ENCODE measurements at regions of chr10 and their contacts with region 1.

Region 1: GRCh38 chr10:16449454-16449853 is 12.6 kb downstream of the PTER start:
- DNase-seq: no peak
- ATAC-seq: no peak
- H3K4me3 ChIP-seq: no peak overlapping the region
- H3K27ac ChIP-seq: no peak overlapping the region
- H3K4me1 ChIP-seq: no peaks in the 10 kb centered on the region
- H3K27me3 ChIP-seq: no peaks in the 10 kb centered on the region
- CTCF ChIP-seq: no peak
- POLR2A ChIP-seq: no peak
- RAD21 ChIP-seq: no peak

Region 2: DNA sequence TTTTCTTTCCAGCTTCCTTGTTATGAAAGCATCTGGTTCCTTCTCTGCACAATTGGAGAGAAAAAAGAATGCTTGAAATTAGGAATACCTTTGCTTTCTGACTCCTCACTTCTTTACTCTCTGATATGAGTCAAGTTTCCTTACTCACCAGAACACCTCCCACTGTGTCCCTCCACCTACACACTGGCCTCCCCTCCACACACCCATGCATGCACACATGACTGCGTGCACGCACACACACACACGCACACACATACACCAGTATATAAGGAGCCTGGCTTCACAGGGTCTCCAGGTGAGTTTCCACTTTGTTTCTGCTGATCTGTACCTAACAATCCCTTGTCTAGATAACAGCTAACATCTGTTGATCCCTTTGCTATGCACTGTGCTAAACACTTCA is 24.0 kb before region 1 on chr10:
- CTCF ChIA-PET with region 1: no interaction called
- POLR2A ChIA-PET with region 1: no interaction called
- dilution Hi-C with region 1: no loop called
- in situ Hi-C with region 1: no loop called
- intact Hi-C with region 1: no loop called
- DNase-seq: no peak
- ATAC-seq: no peak
- H3K4me3 ChIP-seq: no peak overlapping the region
- H3K27ac ChIP-seq: no peak overlapping the region
- H3K4me1 ChIP-seq: no peaks in the 10 kb centered on the region
- H3K27me3 ChIP-seq: no peaks in the 10 kb centered on the region
- CTCF ChIP-seq: no peak
- POLR2A ChIP-seq: no peak
- RAD21 ChIP-seq: no peak

Region 3: DNA sequence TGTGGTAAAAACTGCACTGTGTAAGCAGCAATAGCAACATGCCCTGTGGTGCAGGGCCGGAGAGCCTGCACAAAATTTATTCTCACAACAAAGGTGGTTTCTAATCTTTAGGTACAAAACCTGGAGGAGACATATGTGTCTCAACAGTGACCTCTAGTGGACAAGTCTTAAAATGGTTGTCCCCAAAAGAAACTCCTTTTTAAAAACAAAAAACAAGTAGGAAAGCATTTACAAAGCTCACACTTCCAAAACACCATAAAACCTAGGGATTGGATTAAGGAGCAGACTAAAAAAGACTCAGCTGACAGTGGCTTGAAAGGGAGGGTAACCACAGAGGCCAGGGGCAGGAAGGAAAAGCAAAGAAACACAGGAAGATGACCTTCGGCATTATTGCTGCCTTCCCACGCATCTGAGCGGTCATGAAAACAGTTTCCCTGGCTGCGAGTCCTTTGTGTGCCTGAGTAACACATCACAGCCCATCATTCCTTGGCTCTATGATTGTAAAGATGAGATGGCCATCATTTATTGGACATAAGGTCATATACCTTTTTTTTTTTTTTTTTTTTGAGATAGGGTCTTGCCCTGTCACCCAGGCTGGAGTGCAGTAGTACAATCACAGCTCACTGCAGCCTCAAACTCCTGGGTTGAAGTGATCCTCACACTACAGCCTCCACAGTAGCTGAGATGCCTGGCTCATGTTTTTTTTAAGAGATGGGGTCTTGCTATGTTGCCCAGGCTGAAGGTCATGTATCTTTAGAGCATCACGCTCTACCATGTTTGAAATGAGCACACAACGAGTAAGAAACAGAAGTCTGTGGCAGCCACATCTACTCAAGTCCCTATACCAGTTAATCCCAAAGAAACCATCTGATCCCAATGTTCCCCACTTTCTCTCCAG is 328.3 kb after region 1 on chr10:
- CTCF ChIA-PET with region 1: no interaction called
- POLR2A ChIA-PET with region 1: no interaction called
- dilution Hi-C with region 1: no loop called
- in situ Hi-C with region 1: no loop called
- intact Hi-C with region 1: loop called (anchors 2 kb)
- DNase-seq: peak; percentile 63
- ATAC-seq: peak; percentile 72
- H3K4me3 ChIP-seq: no peak overlapping the region
- H3K27ac ChIP-seq: no peak overlapping the region; the same call in 1 of the 2 replicates
- H3K4me1 ChIP-seq: peaks cover 4% of the 10 kb centered on the region
- H3K27me3 ChIP-seq: no peaks in the 10 kb centered on the region
- CTCF ChIP-seq: peak; percentile 74
- POLR2A ChIP-seq: no peak
- RAD21 ChIP-seq: peak; percentile 68

Region 4: GRCh38 chr10:17217631-17218232 is 768.3 kb after region 1 on chr10:
- CTCF ChIA-PET with region 1: no interaction called
- POLR2A ChIA-PET with region 1: no interaction called
- dilution Hi-C with region 1: no loop called
- in situ Hi-C with region 1: no loop called
- intact Hi-C with region 1: no loop called
- DNase-seq: peak; percentile 89
- ATAC-seq: peak; percentile 4; the same call in 1 of the 2 replicates
- H3K4me3 ChIP-seq: no peak overlapping the region
- H3K27ac ChIP-seq: peak overlapping the region; percentile 64
- H3K4me1 ChIP-seq: peaks cover 19% of the 10 kb centered on the region
- H3K27me3 ChIP-seq: no peaks in the 10 kb centered on the region
- CTCF ChIP-seq: no peak
- POLR2A ChIP-seq: no peak
- RAD21 ChIP-seq: no peak